B cell (primary cell): ENCODE measurements at regions of chr10 and their contacts with region 1.

Region 1: DNA sequence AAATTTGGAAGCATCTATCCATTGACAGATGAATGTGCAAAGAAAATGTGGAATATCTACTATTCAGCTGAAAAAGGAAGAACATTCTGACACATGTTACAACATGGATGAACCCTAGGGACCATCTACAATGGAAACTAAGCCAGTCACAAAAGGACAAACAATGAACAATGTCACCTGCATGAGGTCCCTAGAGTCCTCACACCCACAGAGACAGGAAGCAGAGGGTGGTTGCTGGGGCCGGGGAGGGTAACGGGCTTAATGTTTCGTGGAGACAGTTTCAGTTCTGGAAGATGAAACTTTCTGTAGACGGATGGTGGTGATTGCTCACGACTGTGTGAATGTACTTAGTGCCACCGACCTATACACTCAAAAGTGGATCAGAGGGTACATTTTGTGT is 282.9 kb downstream of the ADARB2 start:
- DNase-seq: peak; percentile 87
- ATAC-seq: peak; percentile 95
- H3K4me3 ChIP-seq: peak overlapping the region in 3 of 5 experiments; percentile 13 to 44 (median 21)
- H3K4me3 Mint-ChIP-seq: peak overlapping the region; percentile 76
- H3K27ac ChIP-seq: peak overlapping the region; percentile 78 to 81
- H3K27ac Mint-ChIP-seq: peak overlapping the region; percentile 91
- H3K4me1 ChIP-seq: peaks cover 36 to 45% of the 10 kb centered on the region in 2 donors
- H3K4me1 Mint-ChIP-seq: peaks cover 66% of the 10 kb centered on the region
- H3K27me3 ChIP-seq: no peaks in the 10 kb centered on the region
- H3K27me3 Mint-ChIP-seq: no peaks in the 10 kb centered on the region
- CTCF ChIP-seq: no peak

Region 2: GRCh38 chr10:1412531-1413189 is 41.8 kb before region 1 on chr10:
- CTCF ChIA-PET with region 1: no interaction called
- POLR2A ChIA-PET with region 1: no interaction called
- intact Hi-C with region 1: loop called (anchors 2 kb)
- DNase-seq: peak; percentile 74
- ATAC-seq: peak; percentile 84
- H3K4me3 ChIP-seq: no peak overlapping the region
- H3K4me3 Mint-ChIP-seq: peak overlapping the region; percentile 46
- H3K27ac ChIP-seq: no peak overlapping the region
- H3K27ac Mint-ChIP-seq: peak overlapping the region; percentile 50
- H3K4me1 ChIP-seq: peaks cover 19 to 24% of the 10 kb centered on the region in 2 donors
- H3K4me1 Mint-ChIP-seq: peaks cover 21% of the 10 kb centered on the region
- H3K27me3 ChIP-seq: peaks cover 0 to 35% (median 3%) of the 10 kb centered on the region in 4 experiments
- H3K27me3 Mint-ChIP-seq: peaks cover 28% of the 10 kb centered on the region
- CTCF ChIP-seq: no peak

Region 3: GRCh38 chr10:1425879-1426278 is 28.5 kb before region 1 on chr10:
- CTCF ChIA-PET with region 1: interaction called, 5 read pairs
- POLR2A ChIA-PET with region 1: interaction called, 11 read pairs
- intact Hi-C with region 1: loop called (anchors 1 kb)
- DNase-seq: peak; percentile 63
- ATAC-seq: peak; percentile 56
- H3K4me3 ChIP-seq: no peak overlapping the region
- H3K4me3 Mint-ChIP-seq: peak overlapping the region; percentile 77
- H3K27ac ChIP-seq: peak overlapping the region; percentile 36 to 65
- H3K27ac Mint-ChIP-seq: peak overlapping the region; percentile 89
- H3K4me1 ChIP-seq: peaks cover 51 to 69% of the 10 kb centered on the region in 2 donors
- H3K4me1 Mint-ChIP-seq: peaks cover 61% of the 10 kb centered on the region
- H3K27me3 ChIP-seq: no peaks in the 10 kb centered on the region
- H3K27me3 Mint-ChIP-seq: no peaks in the 10 kb centered on the region
- CTCF ChIP-seq: no peak

Region 4: DNA sequence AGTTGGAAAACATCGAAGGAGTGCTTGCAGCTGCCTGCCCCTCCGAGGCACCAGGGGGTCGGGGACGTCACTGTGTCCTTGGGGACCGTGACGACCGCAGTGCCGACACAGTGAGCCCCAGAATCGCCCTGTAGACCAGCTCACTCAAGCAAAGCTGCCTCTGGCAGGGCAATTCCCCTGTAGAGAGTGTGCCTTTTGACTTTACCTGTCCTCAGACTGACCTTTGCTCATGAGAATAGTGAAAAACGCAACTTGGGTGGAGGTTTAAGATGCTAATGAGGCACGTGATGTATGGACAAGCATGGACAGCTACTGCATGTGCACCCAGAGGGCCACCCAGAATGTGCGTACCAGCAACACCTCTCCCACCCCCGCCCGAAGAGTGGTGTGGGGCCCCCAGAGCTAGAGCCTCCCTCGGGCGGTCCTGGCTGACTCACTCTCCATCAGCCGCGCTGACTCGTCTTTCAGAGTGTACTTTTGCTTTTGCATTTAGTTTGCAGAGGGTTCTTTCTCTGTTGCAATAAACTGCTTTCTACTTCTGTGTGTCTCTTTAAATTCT is 11.1 kb after region 1 on chr10:
- CTCF ChIA-PET with region 1: no interaction called
- POLR2A ChIA-PET with region 1: no interaction called
- intact Hi-C with region 1: loop called (anchors 1 kb)
- DNase-seq: peak; percentile 57
- ATAC-seq: peak; percentile 80
- H3K4me3 ChIP-seq: peak overlapping the region in 2 of 5 experiments; percentile 11 to 38
- H3K4me3 Mint-ChIP-seq: peak overlapping the region; percentile 71
- H3K27ac ChIP-seq: no peak overlapping the region
- H3K27ac Mint-ChIP-seq: peak overlapping the region; percentile 72
- H3K4me1 ChIP-seq: peaks cover 25 to 37% of the 10 kb centered on the region in 2 donors
- H3K4me1 Mint-ChIP-seq: peaks cover 48% of the 10 kb centered on the region
- H3K27me3 ChIP-seq: peaks cover 0 to 5% (median 0%) of the 10 kb centered on the region in 4 experiments
- H3K27me3 Mint-ChIP-seq: peaks cover 21% of the 10 kb centered on the region
- CTCF ChIP-seq: no peak

Region 5: GRCh38 chr10:1572519-1573333 is 118.3 kb after region 1 on chr10:
- CTCF ChIA-PET with region 1: no interaction called
- POLR2A ChIA-PET with region 1: no interaction called
- intact Hi-C with region 1: loop called (anchors 1 kb)
- DNase-seq: no peak
- ATAC-seq: no peak
- H3K4me3 ChIP-seq: no peak overlapping the region
- H3K4me3 Mint-ChIP-seq: no peak overlapping the region
- H3K27ac ChIP-seq: no peak overlapping the region
- H3K27ac Mint-ChIP-seq: no peak overlapping the region
- H3K4me1 ChIP-seq: peaks cover 32% of the 10 kb centered on the region in 2 donors
- H3K4me1 Mint-ChIP-seq: peaks cover 41% of the 10 kb centered on the region
- H3K27me3 ChIP-seq: peaks cover 0 to 18% (median 2%) of the 10 kb centered on the region in 4 experiments
- H3K27me3 Mint-ChIP-seq: peaks cover 34% of the 10 kb centered on the region
- CTCF ChIP-seq: no peak

Region 6: DNA sequence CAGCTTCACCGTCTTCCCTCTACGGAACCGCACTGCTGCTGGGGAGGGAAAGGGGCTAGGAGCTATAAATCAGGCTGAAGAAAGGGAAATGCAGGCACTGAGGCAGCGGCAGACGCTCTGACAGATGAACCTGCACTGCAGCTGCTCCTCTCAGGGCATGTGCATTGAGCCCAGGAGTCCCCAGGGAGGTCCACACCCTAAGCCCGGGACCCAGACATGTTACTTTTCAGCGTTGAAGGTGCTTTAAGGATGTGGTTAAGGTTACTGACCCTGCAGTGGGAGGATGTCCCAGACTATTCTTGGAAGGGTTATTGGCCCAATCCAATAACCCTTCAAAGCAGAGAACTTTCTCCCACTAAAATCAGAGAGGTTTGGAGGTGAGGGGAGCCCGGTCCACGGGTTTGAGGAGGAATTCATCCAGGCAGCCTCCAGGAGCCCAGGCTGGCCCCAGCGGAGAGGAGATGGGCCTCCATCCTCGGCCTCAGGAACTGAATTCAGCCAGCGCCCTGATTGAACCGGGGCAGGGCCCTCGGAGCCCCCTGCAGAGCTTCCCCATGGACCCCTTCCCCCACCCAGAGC is 207.5 kb after region 1 on chr10:
- CTCF ChIA-PET with region 1: interaction called, 3 read pairs
- POLR2A ChIA-PET with region 1: no interaction called
- intact Hi-C with region 1: loop called (anchors 1 kb)
- DNase-seq: peak; percentile 87
- ATAC-seq: peak; percentile 89
- H3K4me3 ChIP-seq: peak overlapping the region in 2 of 5 experiments; percentile 1 to 20
- H3K4me3 Mint-ChIP-seq: peak overlapping the region; percentile 79
- H3K27ac ChIP-seq: peak overlapping the region; percentile 68 to 71
- H3K27ac Mint-ChIP-seq: peak overlapping the region; percentile 75
- H3K4me1 ChIP-seq: peaks cover 31 to 32% of the 10 kb centered on the region in 2 donors
- H3K4me1 Mint-ChIP-seq: peaks cover 50% of the 10 kb centered on the region
- H3K27me3 ChIP-seq: peaks cover 0 to 5% (median 2%) of the 10 kb centered on the region in 4 experiments
- H3K27me3 Mint-ChIP-seq: peaks cover 19% of the 10 kb centered on the region
- CTCF ChIP-seq: no peak